Transverse colon (tissue), 4 donors: ENCODE measurements at regions of chr9 and their contacts with region 1.

Region 1: GRCh38 chr9:101530077-101530711 is 3.5 kb upstream of the RNF20 start:
- DNase-seq: peak; percentile 77
- H3K4me3 ChIP-seq: no peak overlapping the region
- H3K27ac ChIP-seq: no peak overlapping the region
- H3K4me1 ChIP-seq: peaks cover 0 to 17% (median 12%) of the 10 kb centered on the region in 4 donors
- H3K27me3 ChIP-seq: no peaks in the 10 kb centered on the region
- CTCF ChIP-seq: peak; percentile 80 to 90 (median 85)
- EP300 ChIP-seq: no peak
- POLR2A ChIP-seq: no peak

Region 2: DNA sequence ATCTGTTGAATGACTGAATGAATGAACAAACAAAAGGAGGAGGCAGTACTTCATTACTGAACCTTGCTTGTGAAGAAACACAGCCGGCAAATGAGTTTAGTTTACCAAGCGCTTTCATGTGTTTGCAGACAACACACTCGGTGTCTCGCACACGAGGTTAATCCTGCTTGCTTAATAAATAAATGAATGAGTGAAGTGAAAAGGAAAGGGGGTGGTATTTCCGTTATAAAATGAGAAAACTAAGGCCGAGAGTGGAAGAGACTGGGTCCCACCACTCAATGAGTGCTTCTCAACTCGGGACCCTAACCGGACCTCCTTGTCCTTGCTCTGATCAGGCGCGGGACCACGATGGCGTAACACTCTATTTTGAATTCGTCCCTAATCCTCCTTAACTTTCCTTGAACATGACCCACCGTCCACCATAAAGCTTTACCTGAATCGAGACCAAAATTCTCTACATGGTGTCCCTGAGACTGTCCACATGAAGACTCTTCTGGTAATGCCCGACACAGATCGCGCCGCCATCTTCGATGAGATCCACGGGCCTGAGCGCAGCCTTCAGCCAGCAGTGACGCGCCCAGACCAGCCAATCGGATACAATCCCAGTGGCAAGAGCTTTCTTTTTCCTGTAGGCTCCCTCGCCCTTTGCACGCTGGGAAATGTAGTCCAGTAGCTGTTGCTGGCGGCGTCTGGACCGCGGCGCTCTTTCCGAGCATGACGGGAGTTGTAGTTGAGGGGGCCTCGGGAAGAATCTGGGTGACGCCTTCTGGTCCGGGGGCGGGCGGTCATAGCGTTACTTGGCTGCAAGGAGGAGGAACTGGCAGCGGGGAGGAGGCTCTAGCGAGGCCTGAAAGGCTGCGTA is 131.9 kb before region 1 on chr9 and contains the starts of genes MRPL50 and ZNF189:
- in situ Hi-C with region 1: loop called in 1 of 4 experiments (anchors 10 kb)
- intact Hi-C with region 1: no loop called
- DNase-seq: peak; percentile 98
- H3K4me3 ChIP-seq: peak within 1 kb of the TSS; percentile 53 to 94 (median 74)
- H3K27ac ChIP-seq: peak within 1 kb of the TSS; percentile 84 to 93 (median 88)
- H3K4me1 ChIP-seq: peaks cover 8 to 50% (median 26%) of the 10 kb centered on the region in 4 donors
- H3K27me3 ChIP-seq: no peaks in the 10 kb centered on the region
- CTCF ChIP-seq: no peak
- EP300 ChIP-seq: no peak
- POLR2A ChIP-seq: peak; percentile 84
- total RNA-seq, gene MRPL50: 3.4 to 16.1 (median 9.5) TPM
- total RNA-seq, gene ZNF189: 5.6 to 21.3 (median 13.4) TPM

Region 3: GRCh38 chr9:101458955-101459631 is 71.1 kb before region 1 on chr9:
- in situ Hi-C with region 1: loop called in 1 of 4 experiments (anchors 10 kb)
- intact Hi-C with region 1: loop called (anchors 2 kb)
- DNase-seq: no peak
- H3K4me3 ChIP-seq: no peak overlapping the region
- H3K27ac ChIP-seq: peak overlapping the region in 2 of 4 donors; percentile 18 to 27
- H3K4me1 ChIP-seq: peaks cover 0 to 13% (median 3%) of the 10 kb centered on the region in 4 donors
- H3K27me3 ChIP-seq: no peaks in the 10 kb centered on the region
- CTCF ChIP-seq: peak; percentile 58 to 78 (median 69)
- EP300 ChIP-seq: no peak
- POLR2A ChIP-seq: no peak

Region 4: GRCh38 chr9:101465392-101465791 is 64.8 kb before region 1 on chr9:
- in situ Hi-C with region 1: loop called in 1 of 4 experiments (anchors 5 kb)
- intact Hi-C with region 1: loop called (anchors 2 kb)
- DNase-seq: peak; percentile 84
- H3K4me3 ChIP-seq: no peak overlapping the region
- H3K27ac ChIP-seq: no peak overlapping the region
- H3K4me1 ChIP-seq: peaks cover 0 to 11% (median 2%) of the 10 kb centered on the region in 4 donors
- H3K27me3 ChIP-seq: no peaks in the 10 kb centered on the region
- CTCF ChIP-seq: peak; percentile 13 to 71 (median 42)
- EP300 ChIP-seq: no peak
- POLR2A ChIP-seq: no peak